ENCODE measurements at regions of chr7 and their contacts with region 1.

Region 1: DNA sequence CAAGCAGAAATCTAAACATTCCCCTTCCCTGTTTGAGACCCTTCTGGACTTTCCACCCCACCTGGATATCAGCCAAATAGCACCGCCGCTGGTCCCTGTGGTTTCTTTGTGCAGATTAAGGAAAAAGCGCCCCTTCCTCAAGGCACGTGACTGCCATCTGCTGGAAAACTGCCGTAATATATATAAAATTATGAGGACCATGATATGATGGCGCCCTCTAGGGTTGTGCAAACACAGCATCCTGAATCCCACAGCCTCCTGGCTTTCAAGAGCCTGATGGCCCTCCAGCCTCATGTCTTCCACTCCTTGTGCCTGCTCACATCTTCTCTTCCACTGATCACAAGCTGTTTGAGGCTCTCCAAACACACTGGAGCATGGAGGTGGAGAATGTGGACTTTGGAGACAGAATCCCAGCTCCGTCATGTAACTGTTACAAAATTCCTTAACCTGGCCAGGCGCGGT is 121.3 kb downstream of the MYL10 start:
- DNase-seq: peak; percentile 86
- H3K4me3 ChIP-seq: no peak overlapping the region; a peak in 1 of 4 replicates
- H3K27ac ChIP-seq: no peak overlapping the region
- H3K4me1 ChIP-seq: no peaks in the 10 kb centered on the region; a peak in 1 of 4 replicates
- H3K27me3 ChIP-seq: peaks cover 22% of the 10 kb centered on the region
- CTCF ChIP-seq: peak; percentile 97
- EP300 ChIP-seq: no peak
- RAD21 ChIP-seq: peak; percentile 99

Region 2: DNA sequence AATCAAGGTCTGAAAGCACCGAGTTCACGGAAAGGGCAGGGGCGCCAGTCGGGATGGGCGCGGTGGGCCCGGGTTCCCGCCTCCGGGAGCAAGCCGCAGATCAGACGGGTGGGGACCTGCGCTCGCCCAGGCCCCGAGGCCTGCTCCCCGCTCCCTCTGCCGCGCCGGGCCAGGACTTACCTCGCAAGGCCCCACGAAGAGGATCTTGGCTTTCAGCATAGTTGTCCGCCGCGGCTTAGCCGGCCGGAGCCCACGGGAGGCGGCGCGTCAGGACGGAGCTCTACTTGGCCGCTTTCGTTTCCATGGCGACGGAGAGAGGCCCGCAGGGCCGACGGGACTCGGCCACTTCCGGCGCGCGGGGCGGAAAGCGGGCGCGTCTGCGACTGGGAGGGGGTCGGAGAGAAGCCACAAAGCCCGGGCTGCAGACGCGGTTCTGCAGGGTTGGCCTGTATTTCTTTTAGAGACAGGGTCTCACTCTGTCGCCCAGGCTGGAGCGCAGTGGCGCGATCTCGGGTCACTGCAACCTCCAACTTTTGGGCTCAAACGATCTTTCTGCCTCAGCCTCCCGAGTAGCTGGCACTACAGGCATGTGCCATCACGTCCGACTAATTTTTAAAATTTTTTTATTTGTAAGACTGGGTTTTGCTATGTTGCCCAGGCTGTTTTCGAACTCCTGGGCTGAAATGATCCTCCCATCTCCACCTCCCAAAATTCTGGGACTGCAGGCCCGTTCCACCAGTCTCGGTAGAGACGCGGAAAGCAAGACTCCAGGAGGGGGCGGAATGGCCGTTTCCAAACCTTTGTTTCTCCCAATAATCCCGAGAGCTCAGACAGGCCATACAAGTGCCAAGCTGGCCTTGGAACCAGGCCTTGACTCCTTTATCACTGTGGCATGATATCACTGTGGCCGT is 186.1 kb before region 1 on chr7 and contains the start of gene IFT22:
- CTCF ChIA-PET with region 1: interaction called, 20 read pairs
- POLR2A ChIA-PET with region 1: interaction called, 3 read pairs
- DNase-seq: peak; percentile 99
- H3K4me3 ChIP-seq: peak within 1 kb of the TSS; percentile 61 to 78
- H3K27ac ChIP-seq: peak within 1 kb of the TSS; percentile 59 to 81
- H3K4me1 ChIP-seq: peaks cover 0 to 2% of the 10 kb centered on the region in 2 experiments; a peak in 2 of 4 replicates
- H3K27me3 ChIP-seq: no peaks in the 10 kb centered on the region
- CTCF ChIP-seq: peak; percentile 57
- EP300 ChIP-seq: no peak; a peak in 1 of 4 replicates
- RAD21 ChIP-seq: peak; percentile 72
- polyA plus RNA-seq, gene IFT22: 62.4 and 66.7 TPM in 2 replicates

Region 3: GRCh38 chr7:101370836-101371235 is 137.0 kb before region 1 on chr7:
- CTCF ChIA-PET with region 1: interaction called, 10 read pairs
- POLR2A ChIA-PET with region 1: no interaction called
- DNase-seq: no peak
- H3K4me3 ChIP-seq: no peak overlapping the region
- H3K27ac ChIP-seq: no peak overlapping the region
- H3K4me1 ChIP-seq: peaks cover 0 to 2% of the 10 kb centered on the region in 2 experiments; a peak in 1 of 4 replicates
- H3K27me3 ChIP-seq: 0 out of 2 replicates have a peak, but pooled peaks cover 16% of the 10 kb centered on the region
- CTCF ChIP-seq: no peak
- EP300 ChIP-seq: no peak
- RAD21 ChIP-seq: no peak

Region 4: DNA sequence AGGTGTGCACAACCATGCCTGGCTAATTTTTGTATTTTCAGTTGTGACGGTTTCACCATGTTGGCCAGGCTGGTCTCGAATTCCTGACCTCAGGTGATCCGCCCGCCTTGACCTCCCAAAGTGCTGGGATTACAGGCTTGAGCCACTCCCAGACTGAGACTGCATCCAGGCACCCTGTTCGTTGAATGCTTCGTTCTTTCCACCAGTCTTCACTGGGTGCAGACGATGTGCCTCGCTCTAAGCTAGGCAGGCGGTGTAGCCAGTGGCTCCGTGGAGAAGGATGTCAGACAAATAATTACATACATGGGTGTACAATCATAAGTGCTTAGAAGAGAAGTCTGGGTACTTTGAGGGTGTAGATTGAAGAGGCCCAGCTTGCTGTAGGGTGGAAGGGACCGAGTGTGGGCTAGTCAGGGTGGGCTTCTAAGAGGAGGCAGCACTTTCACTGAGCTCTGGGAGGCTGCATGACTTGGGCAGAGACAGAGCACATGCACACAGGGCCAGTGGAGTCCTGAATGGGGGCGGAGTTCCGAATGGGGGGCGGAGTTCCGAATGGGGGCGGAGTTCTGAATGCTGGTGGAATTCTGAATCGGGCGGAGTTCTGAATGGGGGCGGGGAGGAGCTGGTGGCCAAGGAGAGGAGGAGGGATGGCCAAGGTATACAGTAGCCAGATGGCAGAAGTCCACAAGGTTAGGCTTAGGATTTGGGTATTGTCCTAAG is 70.8 kb before region 1 on chr7:
- CTCF ChIA-PET with region 1: interaction called, 28 read pairs
- POLR2A ChIA-PET with region 1: no interaction called
- DNase-seq: peak; percentile 62
- H3K4me3 ChIP-seq: no peak overlapping the region
- H3K27ac ChIP-seq: no peak overlapping the region
- H3K4me1 ChIP-seq: peaks cover 0 to 4% of the 10 kb centered on the region in 2 experiments; a peak in 1 of 4 replicates
- H3K27me3 ChIP-seq: peaks cover 40% of the 10 kb centered on the region
- CTCF ChIP-seq: no peak
- EP300 ChIP-seq: no peak
- RAD21 ChIP-seq: no peak

Region 5: DNA sequence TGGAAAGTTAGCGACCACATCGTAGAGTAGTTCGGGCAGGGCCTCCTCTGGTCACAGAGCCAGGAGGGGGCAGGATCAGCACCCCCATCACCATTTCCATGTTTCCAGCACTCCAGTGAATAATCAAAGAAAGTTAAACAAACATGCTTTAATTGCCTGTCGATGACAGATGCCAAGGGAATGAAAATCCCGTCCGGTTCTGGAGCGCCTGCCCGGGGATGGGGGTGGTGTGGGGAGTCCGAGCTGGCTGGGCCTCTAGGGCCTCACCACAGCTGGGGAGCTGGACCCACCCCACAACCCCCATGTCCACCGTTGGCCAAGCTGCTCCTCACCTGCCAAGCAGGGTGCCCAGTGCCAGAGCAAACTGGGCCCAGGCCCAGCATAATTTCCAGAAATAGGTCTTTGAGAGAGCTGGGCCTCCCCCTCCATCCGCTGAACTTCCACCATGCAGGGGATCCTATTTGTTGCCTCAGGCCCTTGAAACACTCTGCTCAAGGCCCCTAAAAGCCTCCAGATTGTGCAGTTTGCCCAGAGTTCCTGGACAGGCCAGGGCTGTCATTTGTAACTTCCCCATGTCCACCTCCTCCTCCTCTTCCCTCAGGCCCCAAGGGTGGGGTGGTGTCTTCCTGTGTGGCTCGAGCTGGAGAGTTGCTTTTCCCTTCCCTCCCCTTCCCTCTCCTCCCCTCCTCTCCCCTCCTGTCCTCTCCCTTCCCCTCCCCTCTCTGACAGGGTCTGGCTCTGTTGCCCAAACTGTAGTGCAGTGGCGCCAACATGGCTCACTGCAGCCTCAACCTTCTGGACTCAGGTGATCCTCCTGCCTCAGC is 20.2 kb after region 1 on chr7:
- CTCF ChIA-PET with region 1: interaction called, 10 read pairs
- POLR2A ChIA-PET with region 1: no interaction called
- DNase-seq: no peak
- H3K4me3 ChIP-seq: no peak overlapping the region
- H3K27ac ChIP-seq: no peak overlapping the region
- H3K4me1 ChIP-seq: peaks cover 0 to 2% of the 10 kb centered on the region in 2 experiments; a peak in 1 of 4 replicates
- H3K27me3 ChIP-seq: no peaks in the 10 kb centered on the region
- CTCF ChIP-seq: no peak
- EP300 ChIP-seq: no peak
- RAD21 ChIP-seq: no peak

Region 6: DNA sequence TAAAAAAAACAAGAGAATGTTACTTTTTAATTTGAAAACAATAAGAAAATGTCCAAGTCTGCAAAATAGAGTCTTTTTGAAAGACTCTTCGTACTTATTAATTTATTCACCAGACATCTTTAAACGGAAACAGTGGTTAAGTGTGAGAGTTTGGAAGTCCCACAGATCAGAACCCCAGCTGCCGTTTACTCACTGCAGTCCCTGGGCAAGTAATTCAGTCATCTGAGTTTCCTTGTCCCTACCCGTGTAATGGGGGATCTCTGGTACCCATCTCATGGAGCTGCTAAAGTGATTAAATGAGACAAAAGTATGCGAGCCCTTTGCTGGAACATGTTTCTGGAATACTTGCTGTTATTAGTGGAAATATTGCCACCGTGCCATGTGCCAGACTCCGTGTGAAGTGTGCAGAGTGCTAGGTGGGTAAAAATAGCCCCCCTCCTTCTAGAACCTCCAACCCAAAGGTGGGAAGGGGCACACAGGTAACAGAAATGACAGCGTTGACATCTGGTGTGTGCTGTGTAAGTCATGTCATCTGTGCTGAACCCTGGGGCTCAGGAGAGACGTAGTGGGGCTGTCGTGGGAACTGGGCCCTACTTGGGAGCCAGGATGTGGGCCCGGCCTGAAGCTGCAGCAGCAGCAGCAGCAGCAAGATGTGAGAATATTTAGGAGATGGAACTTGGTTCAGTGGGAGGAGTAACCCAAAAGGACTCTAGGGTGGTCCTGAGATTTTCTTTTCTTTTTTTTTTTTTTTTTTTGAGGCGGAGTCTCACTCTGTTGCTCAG is 450.1 kb after region 1 on chr7:
- CTCF ChIA-PET with region 1: no interaction called
- POLR2A ChIA-PET with region 1: no interaction called
- DNase-seq: no peak
- H3K4me3 ChIP-seq: no peak overlapping the region
- H3K27ac ChIP-seq: peak overlapping the region in 1 of 2 experiments; percentile 23; a peak in 1 of 4 replicates
- H3K4me1 ChIP-seq: peaks cover 8 to 31% of the 10 kb centered on the region in 2 experiments
- H3K27me3 ChIP-seq: no peaks in the 10 kb centered on the region
- CTCF ChIP-seq: no peak
- EP300 ChIP-seq: no peak
- RAD21 ChIP-seq: no peak

Measured in SK-N-SH (cell line).